PC-9 (cell line): ENCODE measurements at regions of chr9 and their contacts with region 1.

Region 1: GRCh38 chr9:73200694-73201452 is 49.2 kb downstream of the ANXA1 start:
- DNase-seq: peak in 1 of 2 experiments; percentile 8
- H3K4me3 ChIP-seq: peak overlapping the region; percentile 31; the same call in 1 of the 2 replicates
- H3K27ac ChIP-seq: no peak overlapping the region
- H3K4me1 ChIP-seq: peaks cover 8% of the 10 kb centered on the region; the same call in 1 of the 2 replicates
- H3K27me3 ChIP-seq: no peaks in the 10 kb centered on the region
- CTCF ChIP-seq: peak; percentile 76

Region 2: DNA sequence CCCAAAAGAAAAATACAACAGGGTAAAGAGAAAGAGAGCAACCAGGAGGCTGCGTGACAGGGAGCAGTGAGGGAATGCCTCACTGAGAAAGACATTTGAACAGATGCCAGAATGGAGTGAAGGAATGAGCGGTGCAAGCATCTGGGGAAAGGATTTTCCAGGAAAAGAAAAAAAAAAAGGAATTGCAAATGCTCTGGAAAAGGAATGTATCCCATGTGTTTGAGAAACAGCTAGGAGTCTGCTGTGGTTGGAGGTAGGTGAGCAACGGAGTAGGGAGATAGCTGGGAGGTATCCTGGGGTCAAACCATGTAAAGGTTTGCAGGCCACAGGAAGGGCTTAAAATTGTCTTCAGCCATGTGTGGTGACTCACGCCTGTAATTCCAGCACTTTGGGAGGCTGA is 1409.0 kb before region 1 on chr9:
- CTCF ChIA-PET with region 1: interaction called, 10 read pairs
- POLR2A ChIA-PET with region 1: no interaction called
- intact Hi-C with region 1: no loop called
- DNase-seq: no peak
- H3K4me3 ChIP-seq: no peak overlapping the region
- H3K27ac ChIP-seq: no peak overlapping the region
- H3K4me1 ChIP-seq: no peaks in the 10 kb centered on the region
- H3K27me3 ChIP-seq: no peaks in the 10 kb centered on the region
- CTCF ChIP-seq: no peak

Region 3: DNA sequence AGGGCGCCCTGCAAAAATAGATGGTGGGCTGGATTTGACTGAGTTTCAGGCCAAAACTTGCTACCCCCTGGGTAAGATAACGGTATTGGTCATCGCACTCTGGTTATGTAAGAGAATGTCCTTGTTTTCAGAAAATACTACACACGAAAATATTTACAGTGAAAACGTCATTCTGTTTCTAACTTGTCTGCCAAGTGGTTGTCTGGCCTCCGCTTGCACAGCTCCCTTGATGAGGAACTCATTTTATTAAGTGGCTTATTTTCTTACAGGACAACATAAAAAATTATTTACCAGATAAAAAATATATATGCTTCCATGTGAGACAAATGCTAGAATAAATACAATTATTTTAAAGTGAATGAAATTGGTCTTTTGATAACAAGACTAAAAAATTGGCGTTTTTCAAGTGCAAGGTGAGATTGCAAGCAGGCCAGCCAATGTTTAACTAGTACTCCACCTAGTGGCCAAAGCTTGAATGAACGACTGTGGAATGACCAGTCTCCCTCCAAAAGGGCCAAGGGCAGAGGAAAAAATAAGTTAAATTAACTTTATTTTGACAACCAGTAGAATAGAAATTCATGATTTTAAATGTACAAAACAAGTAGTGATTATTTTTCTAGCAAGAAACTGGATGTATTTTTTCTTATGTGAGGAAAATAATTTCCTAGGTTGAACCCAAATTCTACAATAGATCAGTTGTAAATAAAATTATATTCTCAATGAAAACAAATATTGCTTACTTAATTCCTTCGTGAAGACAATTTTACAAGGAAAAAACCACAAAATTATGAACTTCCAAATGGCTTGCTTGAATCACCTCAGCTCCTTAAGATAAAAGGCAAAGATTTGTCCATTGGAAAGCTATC is 929.0 kb before region 1 on chr9:
- CTCF ChIA-PET with region 1: no interaction called
- POLR2A ChIA-PET with region 1: no interaction called
- intact Hi-C with region 1: loop called (anchors 5 kb)
- DNase-seq: peak in 1 of 2 experiments; percentile 49
- H3K4me3 ChIP-seq: no peak overlapping the region
- H3K27ac ChIP-seq: no peak overlapping the region
- H3K4me1 ChIP-seq: no peaks in the 10 kb centered on the region
- H3K27me3 ChIP-seq: no peaks in the 10 kb centered on the region
- CTCF ChIP-seq: peak; percentile 92

Region 4: DNA sequence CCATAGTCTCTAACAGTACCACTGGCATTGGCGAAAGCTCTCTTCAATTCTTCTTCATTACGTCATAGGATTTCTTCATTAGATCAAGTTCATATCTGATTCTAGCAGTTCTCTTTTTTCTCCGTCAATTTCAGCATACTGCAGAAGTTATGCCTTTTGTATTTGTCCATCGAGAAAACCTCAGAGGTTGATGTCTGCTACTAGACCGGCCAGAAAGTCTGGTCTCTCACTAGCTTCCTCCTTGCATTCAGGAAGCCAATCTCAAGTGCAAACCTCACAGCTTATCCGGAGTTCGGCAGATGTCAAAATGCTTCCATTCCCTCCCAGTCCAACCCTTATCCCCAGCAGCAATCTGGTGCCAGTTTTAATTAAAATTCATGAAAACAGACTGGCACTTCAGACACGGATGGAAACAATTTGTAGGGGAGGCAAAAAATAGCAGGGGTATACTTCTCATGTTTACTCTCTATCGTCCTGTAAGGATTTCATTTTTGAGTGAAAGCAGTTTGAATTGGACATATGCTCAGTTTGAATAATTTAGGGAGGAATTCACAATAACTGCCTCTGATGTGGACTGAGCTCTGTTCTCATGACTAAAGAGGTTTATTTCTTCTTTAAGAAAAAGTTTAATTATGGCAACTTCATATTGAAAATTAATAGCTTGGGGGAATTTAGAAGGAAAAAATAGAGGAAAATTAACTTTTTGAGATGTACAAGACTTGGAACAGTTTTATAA is 735.8 kb before region 1 on chr9:
- CTCF ChIA-PET with region 1: no interaction called
- POLR2A ChIA-PET with region 1: no interaction called
- intact Hi-C with region 1: no loop called
- DNase-seq: no peak
- H3K4me3 ChIP-seq: no peak overlapping the region
- H3K27ac ChIP-seq: no peak overlapping the region
- H3K4me1 ChIP-seq: no peaks in the 10 kb centered on the region
- H3K27me3 ChIP-seq: no peaks in the 10 kb centered on the region
- CTCF ChIP-seq: no peak

Region 5: GRCh38 chr9:72856972-72857623 is 343.8 kb before region 1 on chr9:
- CTCF ChIA-PET with region 1: interaction called, 11 read pairs
- POLR2A ChIA-PET with region 1: no interaction called
- intact Hi-C with region 1: loop called (anchors 5 kb)
- DNase-seq: peak; percentile 42 to 58
- H3K4me3 ChIP-seq: no peak overlapping the region
- H3K27ac ChIP-seq: peak overlapping the region; percentile 80
- H3K4me1 ChIP-seq: peaks cover 16% of the 10 kb centered on the region
- H3K27me3 ChIP-seq: no peaks in the 10 kb centered on the region
- CTCF ChIP-seq: peak; percentile 77

Region 6: DNA sequence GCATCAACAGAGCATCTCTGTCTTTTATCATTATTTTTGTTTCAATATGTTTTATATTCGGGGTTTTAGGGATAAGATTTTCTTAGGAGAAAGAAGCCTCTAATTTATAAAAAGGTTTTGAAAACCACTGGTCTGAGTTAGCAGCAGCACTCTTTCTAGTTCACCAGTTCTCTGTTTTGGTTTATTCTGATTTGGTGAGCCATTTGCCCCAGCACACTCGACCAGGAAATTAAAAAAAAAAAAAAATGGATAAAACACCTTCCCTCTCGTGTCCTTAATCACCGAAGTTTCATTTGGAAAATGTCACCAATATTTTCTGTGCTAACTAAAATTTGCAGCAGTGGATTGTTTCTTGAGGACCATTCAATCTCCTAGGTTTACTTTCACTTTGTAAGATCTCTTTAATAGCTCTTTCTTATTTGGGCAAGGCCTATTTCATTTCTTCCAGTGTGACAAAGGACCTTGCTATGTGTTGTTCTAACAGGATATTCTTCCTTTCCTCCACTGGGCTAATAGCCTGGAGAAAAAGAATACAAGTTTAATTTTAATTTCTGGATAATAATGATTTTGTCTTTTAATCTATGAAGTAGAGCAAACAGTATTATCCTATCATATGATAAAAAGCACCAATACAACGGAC is 107.0 kb before region 1 on chr9:
- CTCF ChIA-PET with region 1: no interaction called
- POLR2A ChIA-PET with region 1: no interaction called
- intact Hi-C with region 1: no loop called
- DNase-seq: no peak
- H3K4me3 ChIP-seq: peak overlapping the region; percentile 41; the same call in 1 of the 2 replicates
- H3K27ac ChIP-seq: no peak overlapping the region
- H3K4me1 ChIP-seq: 0 out of 2 replicates have a peak, but pooled peaks cover 12% of the 10 kb centered on the region
- H3K27me3 ChIP-seq: no peaks in the 10 kb centered on the region
- CTCF ChIP-seq: no peak

Region 7: GRCh38 chr9:74006935-74007334 is 806.1 kb after region 1 on chr9:
- CTCF ChIA-PET with region 1: no interaction called
- POLR2A ChIA-PET with region 1: no interaction called
- intact Hi-C with region 1: loop called (anchors 10 kb)
- DNase-seq: no peak
- H3K4me3 ChIP-seq: no peak overlapping the region
- H3K27ac ChIP-seq: no peak overlapping the region
- H3K4me1 ChIP-seq: no peaks in the 10 kb centered on the region
- H3K27me3 ChIP-seq: no peaks in the 10 kb centered on the region
- CTCF ChIP-seq: peak; percentile 43

Region 8: GRCh38 chr9:74379718-74380117 is 1178.8 kb after region 1 on chr9:
- CTCF ChIA-PET with region 1: no interaction called
- POLR2A ChIA-PET with region 1: no interaction called
- intact Hi-C with region 1: loop called (anchors 2 kb)
- DNase-seq: peak in 1 of 2 experiments; percentile 16
- H3K4me3 ChIP-seq: no peak overlapping the region
- H3K27ac ChIP-seq: no peak overlapping the region
- H3K4me1 ChIP-seq: no peaks in the 10 kb centered on the region
- H3K27me3 ChIP-seq: no peaks in the 10 kb centered on the region
- CTCF ChIP-seq: peak; percentile 62

Region 9: GRCh38 chr9:74609671-74610405 is 1409.0 kb after region 1 on chr9:
- CTCF ChIA-PET with region 1: interaction called, 28 read pairs
- POLR2A ChIA-PET with region 1: no interaction called
- intact Hi-C with region 1: no loop called
- DNase-seq: no peak
- H3K4me3 ChIP-seq: no peak overlapping the region
- H3K27ac ChIP-seq: no peak overlapping the region
- H3K4me1 ChIP-seq: no peaks in the 10 kb centered on the region
- H3K27me3 ChIP-seq: no peaks in the 10 kb centered on the region
- CTCF ChIP-seq: peak; percentile 37